ENCODE measurements at regions of chr1 and their contacts with region 1.

Region 1: DNA sequence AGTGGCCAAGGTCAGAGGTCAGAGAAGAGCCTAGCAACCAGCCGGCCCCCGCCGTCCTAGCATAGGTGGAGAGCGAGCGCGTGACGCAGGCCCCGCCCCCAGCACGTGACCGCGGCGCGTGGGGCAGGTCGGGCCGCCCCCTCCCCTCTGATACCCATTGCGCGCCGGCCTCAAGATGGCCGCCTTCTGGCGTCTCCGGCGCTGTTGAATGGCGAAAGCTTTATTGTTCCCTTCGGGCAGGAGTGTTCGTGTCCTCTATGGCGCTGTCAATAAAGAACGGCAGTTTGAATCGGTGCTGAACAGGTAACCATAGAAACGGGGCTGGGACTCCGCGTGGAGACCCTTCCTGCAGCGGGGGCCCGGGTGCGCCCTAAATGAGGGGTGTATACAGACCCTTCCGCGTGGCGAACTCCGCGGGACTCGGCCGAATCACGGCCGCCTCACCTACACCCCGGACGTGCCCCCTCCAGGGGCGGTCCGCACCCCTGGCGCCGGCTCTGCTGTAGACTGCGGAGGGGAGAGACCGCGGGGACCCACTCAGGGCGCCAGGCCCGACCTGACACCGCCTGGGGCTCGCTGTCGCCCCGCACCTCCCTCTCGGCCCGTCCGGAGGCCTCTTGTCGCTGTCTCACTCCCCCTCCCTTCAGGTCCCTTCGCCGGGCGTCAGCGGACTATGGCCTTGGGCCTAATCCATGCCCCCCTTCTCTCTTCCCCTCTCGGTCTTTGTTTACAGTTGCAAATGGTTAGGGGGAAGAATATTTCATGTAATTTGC is at the start of gene ZBTB40:
- DNase-seq: peak; percentile 80 to 95
- H3K4me3 ChIP-seq: peak within 1 kb of the TSS; percentile 68
- H3K27ac ChIP-seq: peak within 1 kb of the TSS; percentile 35; the same call in 1 of the 2 replicates
- H3K4me1 ChIP-seq: peaks cover 7% of the 10 kb centered on the region; the same call in 1 of the 2 replicates
- H3K27me3 ChIP-seq: no peaks in the 10 kb centered on the region
- CTCF ChIP-seq: no peak
- total RNA-seq, gene ZBTB40: 13.7 and 21.4 TPM in 2 replicates

Region 2: GRCh38 chr1:22267413-22268175 is 184.3 kb before region 1 on chr1:
- CTCF ChIA-PET with region 1: no interaction called
- POLR2A ChIA-PET with region 1: interaction called, 12 read pairs
- intact Hi-C with region 1: no loop called
- DNase-seq: no peak
- H3K4me3 ChIP-seq: no peak overlapping the region
- H3K27ac ChIP-seq: no peak overlapping the region
- H3K4me1 ChIP-seq: peaks cover 7% of the 10 kb centered on the region
- H3K27me3 ChIP-seq: no peaks in the 10 kb centered on the region
- CTCF ChIP-seq: no peak

Region 3: DNA sequence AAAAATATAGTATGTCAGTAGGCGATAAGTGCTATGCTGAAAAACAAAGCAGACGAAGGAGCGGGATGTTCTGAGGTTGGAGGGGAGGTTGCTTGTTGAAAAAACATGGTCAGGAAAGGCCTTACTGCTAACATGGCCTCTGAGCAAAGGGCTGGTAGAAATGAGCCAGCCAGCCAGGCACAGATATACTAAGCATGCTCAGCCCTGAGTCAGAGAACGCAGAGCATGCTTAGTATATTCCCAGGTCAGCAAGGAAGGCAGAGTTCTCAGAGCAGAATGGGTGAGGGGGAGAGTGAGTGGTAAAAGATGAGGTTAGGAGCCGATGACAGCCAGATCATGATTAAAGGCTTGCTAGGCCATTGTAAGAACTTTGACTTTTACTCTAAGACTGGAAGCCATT is 36.4 kb after region 1 on chr1:
- CTCF ChIA-PET with region 1: no interaction called
- POLR2A ChIA-PET with region 1: no interaction called
- intact Hi-C with region 1: no loop called
- DNase-seq: no peak
- H3K4me3 ChIP-seq: no peak overlapping the region
- H3K27ac ChIP-seq: no peak overlapping the region
- H3K4me1 ChIP-seq: no peaks in the 10 kb centered on the region
- H3K27me3 ChIP-seq: no peaks in the 10 kb centered on the region
- CTCF ChIP-seq: no peak

Region 4: DNA sequence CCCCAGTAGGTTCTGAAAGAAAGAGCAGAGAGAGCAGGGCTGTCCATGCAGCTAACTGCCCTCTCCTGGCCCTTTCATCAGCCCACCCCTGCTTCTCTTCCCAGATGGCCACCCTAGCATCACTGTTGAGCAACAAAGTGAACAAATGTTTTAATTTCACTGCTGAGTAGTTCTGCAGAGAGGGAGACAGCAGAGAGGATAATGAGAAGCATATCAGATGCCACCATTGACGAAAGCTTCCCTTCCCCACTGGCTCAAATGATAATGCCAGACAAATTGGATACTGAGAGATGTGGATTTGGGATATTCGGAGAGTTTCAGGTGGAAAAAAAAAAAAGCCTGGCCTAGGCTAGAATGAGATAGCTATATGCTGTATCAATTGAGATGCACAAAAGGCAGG is 46.6 kb after region 1 on chr1:
- CTCF ChIA-PET with region 1: no interaction called
- POLR2A ChIA-PET with region 1: no interaction called
- intact Hi-C with region 1: no loop called
- DNase-seq: no peak
- H3K4me3 ChIP-seq: no peak overlapping the region
- H3K27ac ChIP-seq: no peak overlapping the region
- H3K4me1 ChIP-seq: no peaks in the 10 kb centered on the region
- H3K27me3 ChIP-seq: no peaks in the 10 kb centered on the region
- CTCF ChIP-seq: no peak